Mammary epithelial cell (primary cell): ENCODE measurements at regions of chr3 and their contacts with region 1.

Region 1: DNA sequence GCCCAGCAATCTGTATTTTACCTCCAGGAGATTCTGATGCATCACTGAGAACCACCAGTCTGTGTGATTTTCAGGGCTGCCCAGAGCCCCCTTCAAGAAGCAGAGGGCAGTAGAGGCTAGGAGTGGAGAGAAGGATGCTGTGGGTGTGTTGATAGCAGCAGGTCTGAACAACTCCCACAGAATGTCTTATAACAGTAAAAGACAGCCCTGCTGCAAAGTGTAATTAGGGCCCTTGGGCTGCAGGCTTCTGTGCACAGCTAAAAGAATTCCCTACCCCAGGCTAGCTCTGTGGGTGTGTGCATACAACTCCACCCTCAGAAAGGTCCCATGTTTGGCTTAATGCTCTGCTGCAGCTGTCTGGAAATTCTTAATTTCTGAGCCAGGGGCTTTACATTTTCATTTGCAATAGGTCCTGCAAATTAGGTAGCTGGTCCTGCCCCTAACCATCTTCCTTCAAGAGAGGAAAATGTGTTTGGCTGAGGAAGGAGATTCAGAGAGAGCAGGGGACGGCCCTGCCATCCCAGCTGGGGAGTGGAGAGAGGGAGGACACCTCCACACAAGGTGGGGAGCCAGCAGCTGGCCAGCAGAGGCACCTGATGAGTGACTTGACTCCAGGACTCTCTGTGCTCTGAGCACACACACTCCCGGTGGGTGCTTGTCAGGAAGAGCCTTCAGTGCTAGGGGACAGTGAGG is 43.2 kb upstream of the RAB6B start:
- DNase-seq: peak; percentile 60
- H3K4me3 ChIP-seq: no peak overlapping the region
- H3K27ac ChIP-seq: no peak overlapping the region
- H3K4me1 ChIP-seq: peaks cover 12% of the 10 kb centered on the region
- H3K27me3 ChIP-seq: peaks cover 17% of the 10 kb centered on the region
- CTCF ChIP-seq: peak; percentile 46 to 70

Region 2: GRCh38 chr3:133988631-133989161 is 49.8 kb after region 1 on chr3:
- CTCF ChIA-PET with region 1: no interaction called
- dilution Hi-C with region 1: no loop called
- in situ Hi-C with region 1: no loop called
- intact Hi-C with region 1: no loop called
- DNase-seq: peak; percentile 34
- H3K4me3 ChIP-seq: no peak overlapping the region
- H3K27ac ChIP-seq: no peak overlapping the region
- H3K4me1 ChIP-seq: peaks cover 24% of the 10 kb centered on the region
- H3K27me3 ChIP-seq: no peaks in the 10 kb centered on the region
- CTCF ChIP-seq: no peak

Region 3: DNA sequence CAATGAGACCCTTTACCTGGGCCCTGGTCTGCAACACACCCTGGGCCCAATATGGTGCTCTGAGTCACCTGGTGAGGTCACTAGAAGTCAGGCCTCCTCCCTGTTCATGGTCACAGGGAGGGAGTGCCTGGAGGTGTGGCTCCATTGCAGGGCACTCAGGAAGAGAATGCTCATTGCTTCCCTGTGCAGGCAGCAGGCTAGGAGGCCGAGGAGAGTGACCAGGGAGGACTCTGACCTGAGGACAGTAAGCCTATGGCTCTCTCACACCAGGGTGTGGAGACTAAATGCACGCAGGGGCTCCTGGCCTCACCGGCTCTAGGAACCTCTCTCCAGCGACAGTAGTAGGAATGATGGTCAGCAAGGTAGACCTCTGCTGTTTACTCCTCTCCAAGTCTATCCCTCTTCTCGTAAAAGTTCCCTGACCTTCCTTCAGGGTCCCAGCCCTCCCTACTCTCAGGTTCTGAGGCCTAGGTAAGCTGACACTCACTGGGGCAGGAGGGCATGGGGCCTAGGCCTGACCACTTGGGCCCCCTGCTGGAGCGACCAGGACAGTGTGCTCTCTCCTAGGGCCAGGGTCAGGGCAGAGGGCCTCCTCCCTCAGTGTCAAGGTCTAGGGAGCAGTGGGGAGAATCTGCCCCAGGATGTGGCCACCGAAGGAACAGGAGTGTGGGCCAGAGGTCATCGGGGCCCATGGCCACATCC is 100.4 kb after region 1 on chr3:
- CTCF ChIA-PET with region 1: no interaction called
- dilution Hi-C with region 1: no loop called
- in situ Hi-C with region 1: no loop called
- intact Hi-C with region 1: loop called (anchors 1 kb)
- DNase-seq: peak; percentile 43
- H3K4me3 ChIP-seq: no peak overlapping the region
- H3K27ac ChIP-seq: no peak overlapping the region
- H3K4me1 ChIP-seq: peaks cover 6% of the 10 kb centered on the region
- H3K27me3 ChIP-seq: no peaks in the 10 kb centered on the region
- CTCF ChIP-seq: peak; percentile 22 to 52

Region 4: DNA sequence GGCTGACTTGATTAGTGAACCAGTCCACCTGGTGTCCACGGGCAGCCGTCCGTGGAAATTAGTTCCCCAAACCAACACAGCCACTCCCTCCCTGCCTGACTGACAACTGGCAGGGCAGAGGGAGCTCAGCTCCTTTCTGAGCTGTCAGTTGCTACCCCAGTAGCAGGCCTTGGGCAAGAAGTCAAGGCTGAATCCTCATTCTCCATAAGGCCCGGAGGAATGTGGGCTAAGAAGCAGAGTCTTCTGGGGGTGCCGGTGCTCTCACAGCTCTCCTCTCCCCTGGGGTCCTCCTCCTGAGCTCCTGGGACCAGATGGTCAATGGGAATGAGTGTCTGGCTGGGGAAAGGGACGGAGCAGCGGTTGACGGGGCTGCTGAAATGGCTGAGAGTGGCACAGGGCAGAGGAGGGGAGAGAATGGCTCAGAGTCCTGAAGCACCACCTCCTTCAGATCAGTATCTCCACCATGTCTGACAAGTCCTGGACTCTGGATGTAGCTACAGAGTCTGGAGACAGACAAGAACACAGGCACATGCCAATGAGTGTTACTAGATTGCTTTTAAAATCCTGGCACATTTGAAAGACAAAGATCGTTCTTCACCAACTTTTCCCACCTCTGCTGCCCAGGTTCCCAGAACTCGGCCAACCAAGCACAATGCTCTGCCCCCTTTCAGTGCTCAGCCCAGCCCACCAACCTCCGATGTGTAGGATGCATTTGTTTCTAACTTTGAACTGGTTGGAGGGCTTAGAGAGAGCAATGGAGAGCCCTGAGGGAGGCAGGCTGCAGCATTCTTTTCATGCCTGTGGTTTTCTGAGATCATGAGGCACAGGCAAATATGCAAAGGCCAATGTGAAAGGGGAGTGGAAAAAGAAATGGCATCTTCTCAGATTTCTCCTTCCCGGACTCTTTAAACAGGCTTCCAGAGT is 418.6 kb after region 1 on chr3:
- CTCF ChIA-PET with region 1: no interaction called
- dilution Hi-C with region 1: no loop called
- in situ Hi-C with region 1: no loop called
- intact Hi-C with region 1: no loop called
- DNase-seq: peak; percentile 82
- H3K4me3 ChIP-seq: no peak overlapping the region
- H3K27ac ChIP-seq: peak overlapping the region; percentile 43
- H3K4me1 ChIP-seq: peaks cover 70% of the 10 kb centered on the region
- H3K27me3 ChIP-seq: no peaks in the 10 kb centered on the region
- CTCF ChIP-seq: no peak